Dendritic cell treated with granulocyte-macrophage colony-stimulating factor and Interleukin-4, amounts not matched to agents 40 ng/mL and 50 ng/mL, for 4 days (primary cell): ENCODE measurements at regions of chr1 and their contacts with region 1.

Region 1: DNA sequence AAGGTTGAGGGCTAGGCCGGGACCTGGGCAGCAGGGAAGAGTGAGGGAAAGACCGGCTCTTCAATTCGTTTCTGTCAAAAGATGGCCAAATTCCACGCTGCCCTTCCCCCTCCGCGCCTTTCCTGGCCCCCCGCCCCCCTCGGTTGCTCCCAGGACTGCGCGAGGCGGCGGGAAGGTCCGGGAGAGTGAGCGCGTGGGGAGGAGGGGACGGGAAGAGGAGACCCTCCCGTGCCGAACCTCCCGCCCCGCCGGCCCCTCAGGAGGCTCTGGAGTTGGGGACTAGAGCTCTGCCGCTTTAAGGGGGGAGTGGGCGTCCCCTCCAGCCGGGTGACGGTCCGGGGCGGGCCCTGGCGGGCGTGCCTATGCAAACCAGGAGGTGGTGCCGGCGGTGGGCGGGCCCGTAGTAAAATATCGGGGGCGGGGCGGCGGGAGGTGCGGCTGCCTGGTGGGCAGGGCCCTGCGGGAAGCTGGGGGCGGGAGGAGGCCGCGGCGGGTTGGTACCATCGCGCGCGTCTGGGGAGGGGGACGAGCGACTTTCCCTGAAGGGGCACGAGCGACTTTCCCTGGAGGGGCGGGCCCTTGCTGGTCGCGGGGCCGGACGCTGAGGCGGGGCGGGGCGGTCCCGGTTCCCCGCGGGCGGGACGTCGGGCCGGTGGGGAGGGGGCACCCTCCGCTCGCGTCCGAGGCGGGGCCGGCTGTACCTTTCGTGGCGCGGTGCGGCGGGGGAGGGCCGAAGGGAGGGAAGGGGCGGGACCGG is 58.2 kb downstream of the BCL9 start:
- H3K4me3 Mint-ChIP-seq: peak overlapping the region; percentile 82
- H3K27ac Mint-ChIP-seq: peak overlapping the region; percentile 73
- H3K4me1 Mint-ChIP-seq: peaks cover 31% of the 10 kb centered on the region
- H3K27me3 Mint-ChIP-seq: peaks cover 25% of the 10 kb centered on the region

Region 2: GRCh38 chr1:147627435-147628110 is 28.0 kb after region 1 on chr1:
- intact Hi-C with region 1: loop called (anchors 1 kb)
- H3K4me3 Mint-ChIP-seq: no peak overlapping the region
- H3K27ac Mint-ChIP-seq: peak overlapping the region; percentile 45
- H3K4me1 Mint-ChIP-seq: peaks cover 76% of the 10 kb centered on the region
- H3K27me3 Mint-ChIP-seq: no peaks in the 10 kb centered on the region

Region 3: GRCh38 chr1:147635342-147635741 is 35.8 kb after region 1 on chr1:
- intact Hi-C with region 1: loop called (anchors 2 kb)
- H3K4me3 Mint-ChIP-seq: peak overlapping the region; percentile 24
- H3K27ac Mint-ChIP-seq: peak overlapping the region; percentile 88
- H3K4me1 Mint-ChIP-seq: peaks cover 88% of the 10 kb centered on the region
- H3K27me3 Mint-ChIP-seq: no peaks in the 10 kb centered on the region

Region 4: GRCh38 chr1:147670317-147671041 is 70.9 kb after region 1 on chr1 and contains the start of gene ACP6:
- intact Hi-C with region 1: loop called (anchors 1 kb)
- H3K4me3 Mint-ChIP-seq: peak within 1 kb of the TSS; percentile 86
- H3K27ac Mint-ChIP-seq: peak within 1 kb of the TSS; percentile 79
- H3K4me1 Mint-ChIP-seq: peaks cover 16% of the 10 kb centered on the region
- H3K27me3 Mint-ChIP-seq: peaks cover 8% of the 10 kb centered on the region